ENCODE measurements at regions of chr9 and their contacts with region 1.

Region 1: GRCh38 chr9:10366171-10366779 is 246.5 kb downstream of the PTPRD start:
- DNase-seq: no peak
- H3K4me3 Mint-ChIP-seq: no peak overlapping the region
- H3K27ac Mint-ChIP-seq: no peak overlapping the region
- H3K4me1 Mint-ChIP-seq: no peaks in the 10 kb centered on the region
- H3K27me3 Mint-ChIP-seq: no peaks in the 10 kb centered on the region

Region 2: DNA sequence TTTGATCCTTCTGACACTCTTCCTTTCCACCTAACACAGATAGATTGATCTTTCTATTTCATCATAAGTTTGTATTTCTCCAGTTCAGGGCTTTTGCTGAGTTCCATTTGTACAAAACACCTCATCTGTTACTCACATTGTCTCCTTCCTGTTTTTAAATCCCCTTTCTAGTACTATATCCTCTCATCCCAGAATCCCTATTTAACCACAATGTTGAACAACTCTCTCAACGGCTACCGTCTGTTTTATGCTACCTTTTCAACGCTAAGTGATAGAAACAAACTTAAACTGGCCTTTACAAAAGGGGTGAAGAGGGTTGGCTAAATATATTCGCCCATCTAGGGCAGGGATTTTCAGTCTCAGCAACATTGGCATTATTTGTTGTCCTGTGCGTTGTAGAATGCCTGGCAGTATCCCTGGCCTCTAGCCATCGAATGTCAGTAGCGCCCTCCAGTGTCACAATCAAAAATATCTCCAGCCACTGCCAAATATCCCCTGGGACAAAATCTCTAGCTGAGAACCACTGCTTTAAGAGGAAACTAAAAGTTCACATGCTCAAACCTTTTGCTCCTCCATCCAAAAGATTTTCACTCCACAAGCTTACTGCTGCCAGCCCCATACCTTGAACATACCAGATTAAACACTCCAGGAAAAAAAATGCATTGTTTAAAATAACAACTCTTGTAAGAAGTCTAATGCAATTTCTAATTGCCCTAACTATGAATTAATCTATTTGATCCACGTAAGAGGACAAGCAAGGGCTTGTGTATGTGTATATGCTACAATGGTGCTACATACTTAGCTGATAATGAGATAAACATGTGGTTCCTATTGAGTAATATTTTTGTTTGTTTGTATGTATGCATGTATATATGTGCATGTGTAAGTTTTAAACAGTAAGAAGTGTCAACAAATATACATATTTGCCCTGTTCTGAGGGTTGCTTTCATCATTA is 97.5 kb before region 1 on chr9:
- CTCF ChIA-PET with region 1: no interaction called
- POLR2A ChIA-PET with region 1: no interaction called
- intact Hi-C with region 1: no loop called
- DNase-seq: no peak
- H3K4me3 Mint-ChIP-seq: no peak overlapping the region
- H3K27ac Mint-ChIP-seq: no peak overlapping the region
- H3K4me1 Mint-ChIP-seq: no peaks in the 10 kb centered on the region
- H3K27me3 Mint-ChIP-seq: no peaks in the 10 kb centered on the region

Region 3: DNA sequence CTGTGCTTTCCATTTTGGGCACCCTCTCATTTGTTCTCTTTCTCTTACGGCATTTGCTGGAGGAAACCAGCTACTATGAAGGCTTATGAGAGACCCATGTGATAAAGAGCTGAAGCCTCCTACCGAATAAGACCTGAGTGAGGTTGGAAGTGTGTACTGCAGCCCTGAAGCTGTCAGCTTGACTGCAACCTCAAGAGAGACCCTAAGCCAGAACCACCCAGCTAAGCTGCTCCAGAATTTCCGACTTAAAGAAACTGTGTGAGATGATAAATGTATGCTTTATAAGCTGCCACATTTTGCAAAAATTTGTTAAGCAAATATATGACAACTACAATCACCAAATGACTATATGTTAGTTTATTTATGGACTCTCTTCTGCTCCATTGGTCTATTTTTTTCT is 398.2 kb after region 1 on chr9:
- CTCF ChIA-PET with region 1: no interaction called
- POLR2A ChIA-PET with region 1: no interaction called
- intact Hi-C with region 1: no loop called
- DNase-seq: no peak
- H3K4me3 Mint-ChIP-seq: no peak overlapping the region
- H3K27ac Mint-ChIP-seq: no peak overlapping the region
- H3K4me1 Mint-ChIP-seq: no peaks in the 10 kb centered on the region
- H3K27me3 Mint-ChIP-seq: no peaks in the 10 kb centered on the region

Region 4: GRCh38 chr9:12329623-12329985 is 1963.3 kb after region 1 on chr9:
- CTCF ChIA-PET with region 1: no interaction called
- POLR2A ChIA-PET with region 1: no interaction called
- intact Hi-C with region 1: loop called (anchors 10 kb)
- DNase-seq: no peak
- H3K4me3 Mint-ChIP-seq: no peak overlapping the region
- H3K27ac Mint-ChIP-seq: no peak overlapping the region
- H3K4me1 Mint-ChIP-seq: no peaks in the 10 kb centered on the region
- H3K27me3 Mint-ChIP-seq: no peaks in the 10 kb centered on the region

Measured in activated CD4-positive, alpha-beta memory T cell treated with anti-CD3 and anti-CD28 coated beads for 36 hours (primary cell).